Motor neuron (in vitro differentiated cells): ENCODE measurements at regions of chr9 and their contacts with region 1.

Region 1: DNA sequence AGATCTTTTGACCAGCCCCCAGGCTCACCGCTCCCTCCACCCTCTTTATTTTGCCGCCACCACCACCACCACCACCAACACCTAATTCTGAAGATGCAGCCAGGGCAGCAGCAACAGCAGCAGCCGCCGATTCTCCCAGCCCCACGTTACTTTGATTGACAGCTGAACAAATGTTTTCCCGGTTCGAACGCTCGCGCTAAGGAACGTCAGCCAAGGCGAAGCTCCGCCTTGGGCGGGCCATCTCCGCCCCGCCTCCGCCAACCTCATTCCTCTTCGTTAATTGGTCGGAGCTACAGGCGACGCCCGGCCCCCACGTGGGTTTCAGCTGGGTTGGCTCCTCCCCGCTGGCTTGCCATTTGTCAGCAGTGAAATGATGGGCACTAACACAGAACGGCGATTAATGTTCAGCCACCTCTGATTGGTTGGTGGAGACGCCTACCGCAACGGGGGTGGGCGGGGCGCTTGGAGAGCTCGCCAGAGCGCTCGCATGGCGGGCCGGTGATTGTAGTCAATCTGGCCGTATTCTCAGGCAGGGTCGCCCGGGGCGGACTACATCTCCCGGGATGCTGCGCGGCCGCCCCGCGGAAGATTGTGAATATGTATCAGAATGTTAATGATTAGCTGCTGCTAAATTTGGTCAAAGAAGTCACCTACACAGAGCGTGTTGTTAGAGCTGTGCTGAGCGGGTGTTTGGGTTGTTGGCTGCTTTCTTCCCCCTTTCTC is at the start of gene TLE4:
- ATAC-seq: peak; percentile 84 to 90 (median 88)
- H3K4me3 ChIP-seq: peak within 1 kb of the TSS; percentile 59 to 95 (median 91)
- H3K27ac ChIP-seq: peak within 1 kb of the TSS; percentile 78 to 93
- H3K4me1 ChIP-seq: peaks cover 1 to 5% of the 10 kb centered on the region in 2 donors
- total RNA-seq, gene TLE4: 30.1 to 93.9 (median 56.2) TPM

Region 2: GRCh38 chr9:78601957-78602565 is 969.4 kb before region 1 on chr9:
- in situ Hi-C with region 1: loop called in 1 of 9 experiments (anchors 25 kb)
- ATAC-seq: peak in 6 of 8 experiments; percentile 21 to 53 (median 40)
- H3K4me3 ChIP-seq: no peak overlapping the region
- H3K27ac ChIP-seq: no peak overlapping the region
- H3K4me1 ChIP-seq: peaks cover 23 to 31% of the 10 kb centered on the region in 2 donors

Region 3: DNA sequence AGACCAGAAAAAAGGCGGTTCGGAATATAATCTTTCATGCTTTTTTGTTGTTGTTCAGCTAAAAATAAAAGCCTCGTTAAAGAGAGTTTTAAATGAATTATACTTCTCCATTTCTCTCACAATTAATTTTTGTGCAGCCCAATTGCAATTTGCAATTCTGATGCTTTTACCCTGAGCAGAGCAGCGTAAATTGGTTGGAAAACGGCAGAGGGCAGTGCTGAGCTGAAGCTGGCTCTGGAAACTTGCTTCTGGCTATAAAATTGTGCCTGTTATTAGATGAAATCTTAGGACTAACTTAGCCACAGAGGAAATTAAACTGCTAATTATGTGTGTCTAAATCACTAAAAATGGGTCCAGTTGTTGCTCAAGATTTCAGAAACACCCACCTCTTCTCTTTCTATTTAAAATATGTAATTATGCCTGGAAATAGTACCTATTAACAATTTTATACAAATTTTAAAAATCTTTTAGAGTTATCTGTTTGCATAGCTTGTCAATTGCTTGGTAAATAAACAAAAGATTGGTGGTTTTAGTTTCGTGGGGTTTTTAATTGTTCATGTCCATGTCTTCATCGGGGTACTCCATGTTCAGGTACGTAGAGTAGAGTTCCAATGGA is 441.5 kb before region 1 on chr9:
- in situ Hi-C with region 1: loop called in 2 of 9 experiments (anchors 25 kb)
- ATAC-seq: peak; percentile 53 to 90 (median 60)
- H3K4me3 ChIP-seq: no peak overlapping the region
- H3K27ac ChIP-seq: no peak overlapping the region
- H3K4me1 ChIP-seq: peaks cover 12 to 14% of the 10 kb centered on the region in 2 donors